ENCODE measurements at regions of chr3 and their contacts with region 1.

Region 1: DNA sequence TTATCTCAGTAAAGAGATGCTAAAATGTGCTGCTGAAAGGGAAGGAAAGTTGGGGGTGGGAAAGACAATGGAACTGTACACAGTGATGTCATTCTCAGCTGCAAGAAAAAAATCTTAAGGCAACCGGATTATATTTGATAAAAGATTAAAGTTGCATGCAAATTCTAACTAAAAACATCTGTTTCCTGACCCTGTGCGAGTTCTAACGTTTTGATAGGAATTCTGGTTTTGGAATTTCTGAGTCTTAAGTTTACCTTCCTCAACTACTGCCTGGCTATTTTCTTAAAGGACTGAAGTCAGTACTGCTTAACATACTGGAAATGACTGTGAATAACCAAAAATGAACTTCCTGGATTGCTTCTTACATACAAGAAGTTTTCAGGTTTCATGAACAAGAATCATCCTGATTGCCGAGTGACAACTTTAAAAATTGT is 115.5 kb downstream of the SLC25A26 start:
- DNase-seq: no peak
- ATAC-seq: no peak
- H3K4me3 ChIP-seq: no peak overlapping the region
- H3K4me3 Mint-ChIP-seq: no peak overlapping the region
- H3K27ac ChIP-seq: no peak overlapping the region
- H3K27ac Mint-ChIP-seq: peak overlapping the region; percentile 7
- H3K4me1 ChIP-seq: no peaks in the 10 kb centered on the region
- H3K4me1 Mint-ChIP-seq: peaks cover 32% of the 10 kb centered on the region
- H3K27me3 ChIP-seq: no peaks in the 10 kb centered on the region
- H3K27me3 Mint-ChIP-seq: no peaks in the 10 kb centered on the region
- CTCF ChIP-seq: no peak

Region 2: GRCh38 chr3:66302288-66302687 is 34.1 kb before region 1 on chr3:
- CTCF ChIA-PET with region 1: no interaction called
- POLR2A ChIA-PET with region 1: no interaction called
- intact Hi-C with region 1: loop called in 1 of 2 experiments (anchors 5 kb)
- DNase-seq: peak in 7 of 9 experiments; percentile 37 to 90 (median 55)
- ATAC-seq: peak; percentile 68
- H3K4me3 ChIP-seq: no peak overlapping the region
- H3K4me3 Mint-ChIP-seq: peak overlapping the region; percentile 10
- H3K27ac ChIP-seq: peak overlapping the region; percentile 69 to 97
- H3K27ac Mint-ChIP-seq: peak overlapping the region; percentile 95
- H3K4me1 ChIP-seq: peaks cover 55% of the 10 kb centered on the region
- H3K4me1 Mint-ChIP-seq: peaks cover 81% of the 10 kb centered on the region
- H3K27me3 ChIP-seq: no peaks in the 10 kb centered on the region
- H3K27me3 Mint-ChIP-seq: no peaks in the 10 kb centered on the region
- CTCF ChIP-seq: no peak

Region 3: DNA sequence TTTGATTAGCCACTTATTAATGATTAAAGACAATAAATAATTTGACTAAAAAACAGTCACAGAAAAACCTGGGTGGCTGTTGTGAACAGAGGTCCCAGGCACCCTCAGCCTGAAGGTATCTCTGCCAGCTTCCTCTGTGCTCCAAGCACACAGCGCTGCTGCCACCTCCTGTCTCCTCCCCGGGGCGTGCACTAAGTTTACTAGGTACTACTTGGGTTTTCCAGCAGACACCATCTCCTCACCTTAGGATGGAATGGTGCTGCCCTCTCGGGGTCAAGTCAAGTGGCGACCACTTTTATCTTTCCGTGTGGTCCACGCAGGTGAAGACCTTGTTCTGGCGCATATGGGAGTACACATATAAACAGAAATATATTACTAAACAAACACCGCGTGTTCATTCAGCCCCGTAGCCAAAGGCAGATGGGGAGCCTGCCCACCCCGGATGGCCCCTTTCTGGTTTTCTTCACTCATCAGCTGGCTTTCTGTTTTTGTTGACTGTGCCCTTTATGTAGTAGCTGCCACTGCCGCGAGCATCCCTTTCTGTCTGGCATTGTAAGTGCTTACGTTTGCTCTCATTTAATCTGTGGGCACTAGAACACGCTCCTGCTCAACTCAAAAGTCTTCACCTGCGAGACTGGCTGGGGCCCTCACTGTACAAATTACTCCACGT is 36.5 kb after region 1 on chr3:
- CTCF ChIA-PET with region 1: no interaction called
- POLR2A ChIA-PET with region 1: no interaction called
- intact Hi-C with region 1: loop called in 1 of 2 experiments (anchors 5 kb)
- DNase-seq: peak; percentile 30 to 76 (median 55)
- ATAC-seq: peak; percentile 83
- H3K4me3 ChIP-seq: no peak overlapping the region
- H3K4me3 Mint-ChIP-seq: no peak overlapping the region
- H3K27ac ChIP-seq: no peak overlapping the region
- H3K27ac Mint-ChIP-seq: peak overlapping the region; percentile 52
- H3K4me1 ChIP-seq: no peaks in the 10 kb centered on the region
- H3K4me1 Mint-ChIP-seq: peaks cover 5% of the 10 kb centered on the region
- H3K27me3 ChIP-seq: no peaks in the 10 kb centered on the region
- H3K27me3 Mint-ChIP-seq: no peaks in the 10 kb centered on the region
- CTCF ChIP-seq: peak; percentile 38

Region 4: DNA sequence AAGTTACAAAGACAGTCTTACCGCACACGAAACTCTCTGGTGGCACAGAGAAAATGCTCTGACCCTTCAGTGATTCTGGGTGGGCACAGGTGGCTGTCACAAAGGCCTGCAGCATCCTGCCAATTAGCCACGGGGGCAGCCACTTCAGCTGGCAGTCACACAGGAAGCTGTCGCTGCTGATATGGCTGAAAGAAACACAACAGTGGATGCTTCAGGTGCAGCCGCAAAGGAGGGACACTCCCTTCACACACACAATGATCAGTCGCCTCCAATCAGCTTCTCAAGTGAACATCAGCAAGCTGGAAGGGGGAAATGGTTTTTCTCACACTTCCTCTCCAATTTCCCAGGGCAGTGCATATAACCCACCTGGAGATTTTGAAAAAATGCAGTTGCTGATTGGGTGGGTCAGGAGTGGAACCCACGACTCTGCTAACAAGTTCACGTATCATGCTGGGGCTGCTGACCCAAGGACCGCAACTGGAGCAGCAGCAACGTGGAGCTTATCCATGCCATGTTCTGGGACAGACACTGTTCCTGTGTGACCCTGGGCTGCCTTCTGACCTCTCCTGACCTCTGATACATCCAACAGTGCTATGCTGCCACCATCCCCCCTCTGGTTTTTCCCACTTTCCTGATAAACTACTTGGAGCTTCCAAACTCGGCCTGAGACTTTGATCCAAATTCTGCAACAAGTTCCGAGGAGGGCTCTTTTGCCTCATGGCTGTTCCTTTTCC is 57.8 kb after region 1 on chr3:
- CTCF ChIA-PET with region 1: no interaction called
- POLR2A ChIA-PET with region 1: no interaction called
- intact Hi-C with region 1: no loop called
- DNase-seq: peak; percentile 32 to 84 (median 60)
- ATAC-seq: peak; percentile 93
- H3K4me3 ChIP-seq: peak overlapping the region; percentile 16 to 35
- H3K4me3 Mint-ChIP-seq: peak overlapping the region; percentile 85
- H3K27ac ChIP-seq: peak overlapping the region; percentile 57 to 72
- H3K27ac Mint-ChIP-seq: peak overlapping the region; percentile 95
- H3K4me1 ChIP-seq: peaks cover 24% of the 10 kb centered on the region
- H3K4me1 Mint-ChIP-seq: peaks cover 56% of the 10 kb centered on the region
- H3K27me3 ChIP-seq: no peaks in the 10 kb centered on the region
- H3K27me3 Mint-ChIP-seq: no peaks in the 10 kb centered on the region
- CTCF ChIP-seq: no peak